GM23248 (cell line): ENCODE measurements at regions of chr12 and their contacts with region 1.

Region 1: DNA sequence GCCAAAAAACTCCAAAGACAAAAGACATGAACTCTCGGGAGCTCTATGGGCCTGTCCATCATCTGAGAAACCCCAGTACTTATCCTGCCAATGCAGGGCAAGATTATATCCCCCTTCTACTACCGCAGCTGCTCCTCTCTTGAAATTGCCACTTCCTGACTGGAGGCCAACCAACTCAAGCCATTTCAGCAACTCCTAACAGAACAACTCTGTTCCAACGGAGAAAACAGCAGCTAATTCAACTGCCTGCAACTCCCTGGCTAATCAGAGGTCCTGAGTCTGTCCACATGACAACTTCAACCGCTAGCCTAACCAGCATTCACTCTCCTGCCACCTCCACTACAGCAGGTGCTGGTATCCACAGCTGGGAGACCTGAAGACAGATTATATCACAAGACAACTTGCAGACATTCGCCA is 24.1 kb downstream of the CEP83 start:
- DNase-seq: no peak
- H3K4me3 ChIP-seq: no peak overlapping the region
- H3K27ac ChIP-seq: no peak overlapping the region
- H3K4me1 ChIP-seq: no peaks in the 10 kb centered on the region
- H3K27me3 ChIP-seq: no peaks in the 10 kb centered on the region

Region 2: GRCh38 chr12:94149119-94149780 is 286.3 kb before region 1 on chr12:
- in situ Hi-C with region 1: loop called (anchors 10 kb)
- DNase-seq: peak; percentile 57
- H3K4me3 ChIP-seq: peak overlapping the region; percentile 67
- H3K27ac ChIP-seq: no peak overlapping the region
- H3K4me1 ChIP-seq: no peaks in the 10 kb centered on the region
- H3K27me3 ChIP-seq: peaks cover 57% of the 10 kb centered on the region

Region 3: GRCh38 chr12:94187361-94187760 is 248.2 kb before region 1 on chr12:
- in situ Hi-C with region 1: no loop called
- DNase-seq: peak; percentile 23
- H3K4me3 ChIP-seq: no peak overlapping the region
- H3K27ac ChIP-seq: no peak overlapping the region
- H3K4me1 ChIP-seq: peaks cover 5% of the 10 kb centered on the region
- H3K27me3 ChIP-seq: peaks cover 8% of the 10 kb centered on the region

Region 4: GRCh38 chr12:94525951-94526350 is 90.4 kb after region 1 on chr12:
- in situ Hi-C with region 1: no loop called
- DNase-seq: no peak
- H3K4me3 ChIP-seq: no peak overlapping the region
- H3K27ac ChIP-seq: no peak overlapping the region
- H3K4me1 ChIP-seq: no peaks in the 10 kb centered on the region
- H3K27me3 ChIP-seq: peaks cover 37% of the 10 kb centered on the region